ENCODE measurements at regions of chr17 and their contacts with region 1.

Region 1: DNA sequence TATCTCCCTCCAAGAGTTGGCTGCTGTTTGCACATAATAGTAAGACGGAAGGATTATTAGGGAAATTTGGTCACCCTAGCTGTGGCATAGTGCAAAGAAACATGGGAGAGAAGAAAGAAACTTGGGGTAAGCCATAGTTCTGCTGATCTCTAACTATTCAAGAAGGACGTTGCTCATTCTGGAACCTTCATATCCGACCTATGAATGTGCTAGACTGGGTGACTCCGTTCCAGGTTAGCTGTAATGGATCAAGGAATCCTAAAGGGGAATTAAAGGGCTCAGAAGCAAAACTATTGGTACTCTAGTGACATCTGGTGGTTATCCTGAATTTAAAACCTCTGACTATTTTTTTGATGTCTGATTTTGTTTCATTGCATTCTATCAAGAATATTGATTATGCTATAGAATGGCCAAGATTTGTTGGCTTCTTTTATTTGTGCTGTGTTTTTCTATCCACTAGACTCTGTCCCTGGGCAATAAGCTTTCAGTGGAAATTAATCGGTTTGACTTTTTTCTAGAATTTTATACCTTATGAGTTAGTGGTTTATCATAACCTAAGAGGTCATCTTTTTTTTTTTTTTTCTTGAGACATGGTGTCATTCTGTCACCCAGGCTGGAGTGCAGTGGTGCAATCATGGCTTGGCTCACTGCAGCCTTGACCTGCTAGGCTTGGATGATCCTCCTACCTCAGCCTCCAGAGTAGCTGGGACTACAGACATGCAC is 19.5 kb downstream of the PCTP start:
- DNase-seq: peak; percentile 39 to 64 (median 52)
- ATAC-seq: peak; percentile 65
- H3K4me3 ChIP-seq: no peak overlapping the region
- H3K27ac ChIP-seq: no peak overlapping the region
- H3K4me1 ChIP-seq: no peaks in the 10 kb centered on the region
- H3K27me3 ChIP-seq: no peaks in the 10 kb centered on the region
- CTCF ChIP-seq: peak; percentile 36 to 81 (median 56); a peak in 4 of 6 replicates
- EP300 ChIP-seq: no peak
- POLR2A ChIP-seq: no peak
- RAD21 ChIP-seq: peak; percentile 86 to 90

Region 2: GRCh38 chr17:55601874-55602364 is 168.4 kb before region 1 on chr17:
- CTCF ChIA-PET with region 1: interaction called, 5 read pairs
- POLR2A ChIA-PET with region 1: no interaction called
- in situ Hi-C with region 1: no loop called
- intact Hi-C with region 1: loop called (anchors 2 kb)
- DNase-seq: peak; percentile 16 to 43 (median 21)
- ATAC-seq: peak; percentile 75
- H3K4me3 ChIP-seq: no peak overlapping the region
- H3K27ac ChIP-seq: no peak overlapping the region
- H3K4me1 ChIP-seq: no peaks in the 10 kb centered on the region; a peak in 1 of 5 replicates
- H3K27me3 ChIP-seq: no peaks in the 10 kb centered on the region; a peak in 1 of 5 replicates
- CTCF ChIP-seq: peak; percentile 61 to 78 (median 66)
- EP300 ChIP-seq: no peak
- POLR2A ChIP-seq: no peak
- RAD21 ChIP-seq: peak; percentile 65 to 93

Region 3: GRCh38 chr17:55717898-55718735 is 52.2 kb before region 1 on chr17:
- CTCF ChIA-PET with region 1: no interaction called
- POLR2A ChIA-PET with region 1: no interaction called
- in situ Hi-C with region 1: loop called (anchors 5 kb)
- intact Hi-C with region 1: loop called (anchors 10 kb)
- DNase-seq: peak; percentile 42 to 83 (median 48)
- ATAC-seq: peak; percentile 83
- H3K4me3 ChIP-seq: no peak overlapping the region
- H3K27ac ChIP-seq: no peak overlapping the region
- H3K4me1 ChIP-seq: peaks cover 0 to 6% of the 10 kb centered on the region in 2 experiments; a peak in 3 of 5 replicates
- H3K27me3 ChIP-seq: no peaks in the 10 kb centered on the region
- CTCF ChIP-seq: peak; percentile 76 to 83 (median 78)
- EP300 ChIP-seq: no peak
- POLR2A ChIP-seq: no peak
- RAD21 ChIP-seq: peak; percentile 81 to 87

Region 4: GRCh38 chr17:55750750-55751657 is 19.3 kb before region 1 on chr17 and contains the start of gene PCTP:
- CTCF ChIA-PET with region 1: no interaction called
- POLR2A ChIA-PET with region 1: no interaction called
- in situ Hi-C with region 1: no loop called
- intact Hi-C with region 1: no loop called
- DNase-seq: peak; percentile 96 to 97 (median 97)
- ATAC-seq: peak; percentile 98
- H3K4me3 ChIP-seq: peak within 1 kb of the TSS; percentile 83
- H3K27ac ChIP-seq: peak within 1 kb of the TSS; percentile 84
- H3K4me1 ChIP-seq: peaks cover 5 to 22% of the 10 kb centered on the region in 2 experiments; a peak in 4 of 5 replicates
- H3K27me3 ChIP-seq: no peaks in the 10 kb centered on the region
- CTCF ChIP-seq: peak; percentile 38 to 56 (median 55)
- EP300 ChIP-seq: 0 out of 2 replicates have a peak, but pooled peaks have one; percentile 11
- POLR2A ChIP-seq: peak; percentile 96
- RAD21 ChIP-seq: 0 out of 4 replicates have a peak, but pooled peaks of 1 of the 2 experiments have one; percentile 15
- polyA plus RNA-seq, gene PCTP: 10.9 to 12.4 TPM

Region 5: DNA sequence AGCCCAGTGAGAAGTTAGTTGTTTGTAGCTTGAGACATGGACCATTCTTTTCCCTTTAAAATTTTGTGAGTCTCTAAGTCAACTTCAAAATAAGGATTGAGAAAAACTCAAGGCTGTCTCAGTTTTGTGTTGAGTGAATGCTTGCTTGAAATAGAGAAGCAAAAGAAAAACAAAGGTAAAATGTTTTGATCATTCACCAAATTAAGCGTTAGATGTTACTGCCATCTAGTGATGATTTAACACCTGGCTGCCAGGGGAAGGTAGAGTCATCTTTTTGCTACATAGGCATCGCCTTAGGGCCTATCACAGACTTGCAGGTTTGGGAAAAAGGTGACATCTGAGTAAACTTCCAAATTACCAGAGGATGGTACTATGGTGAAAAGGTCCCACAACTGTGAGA is 54.9 kb after region 1 on chr17:
- CTCF ChIA-PET with region 1: interaction called, 3 read pairs
- POLR2A ChIA-PET with region 1: no interaction called
- in situ Hi-C with region 1: no loop called
- intact Hi-C with region 1: loop called (anchors 1 kb)
- DNase-seq: peak in 3 of 4 experiments; percentile 22 to 53 (median 38)
- ATAC-seq: peak; percentile 82
- H3K4me3 ChIP-seq: no peak overlapping the region
- H3K27ac ChIP-seq: no peak overlapping the region
- H3K4me1 ChIP-seq: no peaks in the 10 kb centered on the region; a peak in 2 of 5 replicates
- H3K27me3 ChIP-seq: no peaks in the 10 kb centered on the region
- CTCF ChIP-seq: peak; percentile 56 to 84 (median 61); a peak in 5 of 6 replicates
- EP300 ChIP-seq: no peak
- POLR2A ChIP-seq: no peak
- RAD21 ChIP-seq: peak; percentile 79 to 91